Head of caudate nucleus (tissue), 42 donors: ENCODE measurements at regions of chr19 and their contacts with region 1.

Region 1: GRCh38 chr19:47444388-47444821 is 25.1 kb upstream of the MEIS3 start:
- DNase-seq: peak in 1 of 42 donors; percentile 29

Region 2: DNA sequence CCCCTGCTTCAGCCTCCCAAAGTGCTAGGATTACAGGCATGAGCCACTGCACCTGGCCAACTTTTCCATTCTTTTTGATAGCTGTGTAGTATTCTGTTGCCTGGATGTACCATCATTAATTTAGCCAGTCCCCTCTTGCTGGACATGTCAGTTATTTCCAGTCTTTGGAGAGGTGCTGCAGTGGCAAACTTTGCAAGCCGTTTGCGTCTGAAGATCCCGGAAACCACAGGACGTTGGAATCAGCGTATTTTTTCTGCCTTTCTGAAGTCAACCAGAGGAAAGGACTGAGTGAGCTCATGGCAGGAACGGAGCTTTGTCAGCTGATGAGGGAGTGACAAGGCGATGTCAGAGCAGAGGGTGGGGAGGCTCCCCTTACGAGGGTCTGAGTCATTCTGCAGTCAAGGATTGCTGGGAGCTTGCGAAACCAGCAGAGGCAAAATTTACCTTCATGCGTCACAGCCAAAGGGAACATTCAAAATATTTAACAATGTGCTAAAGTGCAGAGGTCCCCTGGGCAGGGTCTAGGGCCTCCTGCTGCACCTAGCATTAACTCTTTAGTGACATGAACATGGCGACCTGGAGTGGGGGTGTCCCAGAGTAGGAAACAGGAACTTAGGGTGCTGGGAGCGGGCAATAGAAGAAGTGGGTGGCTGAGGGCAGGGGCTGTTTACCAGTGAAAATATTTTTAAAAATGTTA is 129.1 kb before region 1 on chr19:
- intact Hi-C with region 1: no loop called
- DNase-seq: peak; percentile 45 to 93 (median 76)

Region 3: DNA sequence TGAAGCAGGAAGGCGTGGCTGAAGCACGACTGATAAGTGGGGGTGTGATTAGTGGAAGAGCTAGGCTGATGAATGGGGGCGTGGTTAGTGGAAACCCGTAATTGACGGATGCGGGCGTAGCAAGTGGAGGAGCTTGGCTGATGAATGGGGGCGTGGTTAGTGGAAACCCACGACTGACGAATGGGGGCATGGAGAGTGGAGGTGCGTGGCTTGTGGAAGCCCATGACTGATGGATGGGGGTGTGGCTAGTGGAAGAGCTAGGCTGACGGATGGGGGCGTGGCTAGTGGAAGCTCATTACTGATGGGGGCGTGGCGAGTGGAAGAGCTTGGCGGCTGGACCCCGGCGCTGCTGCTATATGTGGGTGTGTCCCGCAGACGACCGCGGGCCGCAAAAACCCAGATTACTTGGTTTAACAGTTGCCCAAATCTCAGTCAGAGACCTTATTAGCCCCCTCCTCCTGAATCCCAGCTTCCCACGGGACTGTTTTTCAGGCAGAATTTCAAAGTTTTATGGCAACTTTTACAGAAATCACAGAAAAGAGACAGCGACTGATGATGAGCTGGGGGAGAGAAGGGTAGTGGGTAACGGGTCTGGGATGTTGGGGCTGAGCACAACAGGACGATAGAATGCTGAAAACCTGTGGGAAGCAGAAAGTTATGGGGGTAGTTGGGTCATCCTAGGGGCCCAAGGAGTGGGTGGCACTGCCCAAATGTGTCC is 16.1 kb before region 1 on chr19:
- intact Hi-C with region 1: no loop called
- DNase-seq: peak; percentile 71 to 96 (median 86)

Region 4: DNA sequence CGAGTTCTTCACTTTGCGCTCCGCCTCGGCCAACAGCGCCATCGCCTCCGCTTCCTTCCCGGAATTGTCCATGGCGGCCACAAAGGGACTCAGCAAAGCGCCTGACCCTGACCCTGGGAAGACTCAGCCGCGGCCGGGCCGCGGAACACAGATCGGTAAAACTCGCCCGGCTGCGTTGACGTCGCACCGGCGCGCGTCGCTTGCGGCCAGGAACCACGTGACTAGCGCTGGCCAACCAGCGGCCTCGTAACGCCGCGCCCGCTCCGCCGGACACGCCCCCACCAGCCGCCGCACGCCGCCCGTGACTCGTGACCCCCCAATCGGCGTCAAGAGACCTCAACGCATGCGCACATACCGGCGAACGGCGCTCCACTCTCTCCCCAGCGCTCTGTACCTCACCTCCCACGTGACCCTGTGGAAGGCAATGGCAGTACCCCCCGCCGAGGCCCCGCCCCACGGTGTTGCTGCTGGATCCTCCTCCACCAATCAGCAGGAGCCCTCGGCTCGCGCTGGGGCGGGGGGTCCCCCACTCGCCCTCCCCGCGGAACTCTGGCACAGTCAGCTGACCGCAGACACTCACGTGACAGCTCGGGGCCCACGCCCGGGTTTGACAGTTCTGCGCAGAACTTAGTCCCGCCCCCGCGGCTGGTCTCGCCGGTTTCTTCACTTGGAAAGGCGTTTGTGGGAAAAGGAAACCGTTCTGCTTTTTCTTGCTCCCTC is 70.6 kb after region 1 on chr19 and contains the start of gene NAPA:
- intact Hi-C with region 1: loop called (anchors 5 kb)
- DNase-seq: peak; percentile 100